Activated CD4-positive, alpha-beta T cell treated with anti-CD3 and anti-CD28 coated beads for 36 hours (primary cell): ENCODE measurements at regions of chr6 and their contacts with region 1.

Region 1: GRCh38 chr6:90123831-90124230 is 172.8 kb downstream of the BACH2 start:
- DNase-seq: peak; percentile 75
- ATAC-seq: peak; percentile 53
- H3K4me3 Mint-ChIP-seq: no peak overlapping the region
- H3K27ac Mint-ChIP-seq: peak overlapping the region; percentile 72
- H3K4me1 Mint-ChIP-seq: peaks cover 77% of the 10 kb centered on the region
- H3K27me3 Mint-ChIP-seq: no peaks in the 10 kb centered on the region

Region 2: GRCh38 chr6:90110971-90111370 is 12.9 kb before region 1 on chr6:
- CTCF ChIA-PET with region 1: interaction called, 3 read pairs
- POLR2A ChIA-PET with region 1: no interaction called
- intact Hi-C with region 1: loop called in 1 of 2 experiments (anchors 1 kb)
- DNase-seq: peak; percentile 81
- ATAC-seq: peak; percentile 43
- H3K4me3 Mint-ChIP-seq: peak overlapping the region; percentile 28
- H3K27ac Mint-ChIP-seq: peak overlapping the region; percentile 72
- H3K4me1 Mint-ChIP-seq: peaks cover 81% of the 10 kb centered on the region
- H3K27me3 Mint-ChIP-seq: no peaks in the 10 kb centered on the region

Region 3: DNA sequence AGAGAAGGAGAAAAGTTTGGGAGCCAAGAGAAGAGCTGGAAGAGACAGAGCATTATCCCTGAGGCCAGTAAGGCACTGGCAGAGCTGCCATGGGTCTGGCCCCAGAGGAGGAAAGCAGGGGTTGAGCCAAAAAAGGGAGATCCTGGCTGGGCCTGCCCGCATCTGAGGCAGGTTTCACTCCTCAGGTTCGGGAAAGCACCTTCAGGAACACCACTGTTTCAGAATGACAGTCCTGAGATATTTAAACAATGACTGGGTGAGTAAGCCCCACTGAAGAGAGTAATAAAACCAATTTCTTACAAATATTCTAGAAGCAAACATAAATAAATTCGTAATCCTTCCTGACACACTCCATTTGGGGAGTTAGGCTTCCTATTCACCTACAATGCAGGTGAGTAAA is 20.6 kb after region 1 on chr6:
- CTCF ChIA-PET with region 1: interaction called, 4 read pairs
- POLR2A ChIA-PET with region 1: interaction called, 3 read pairs
- intact Hi-C with region 1: loop called in 1 of 2 experiments (anchors 1 kb)
- DNase-seq: peak; percentile 75
- ATAC-seq: peak; percentile 75
- H3K4me3 Mint-ChIP-seq: peak overlapping the region; percentile 32
- H3K27ac Mint-ChIP-seq: peak overlapping the region; percentile 95
- H3K4me1 Mint-ChIP-seq: peaks cover 81% of the 10 kb centered on the region
- H3K27me3 Mint-ChIP-seq: no peaks in the 10 kb centered on the region

Region 4: GRCh38 chr6:90764001-90764400 is 640.2 kb after region 1 on chr6:
- CTCF ChIA-PET with region 1: no interaction called
- POLR2A ChIA-PET with region 1: no interaction called
- intact Hi-C with region 1: no loop called
- DNase-seq: no peak
- ATAC-seq: no peak
- H3K4me3 Mint-ChIP-seq: no peak overlapping the region
- H3K27ac Mint-ChIP-seq: no peak overlapping the region
- H3K4me1 Mint-ChIP-seq: no peaks in the 10 kb centered on the region
- H3K27me3 Mint-ChIP-seq: peaks cover 8% of the 10 kb centered on the region